BJ (cell line): ENCODE measurements at regions of chr19 and their contacts with region 1.

Region 1: DNA sequence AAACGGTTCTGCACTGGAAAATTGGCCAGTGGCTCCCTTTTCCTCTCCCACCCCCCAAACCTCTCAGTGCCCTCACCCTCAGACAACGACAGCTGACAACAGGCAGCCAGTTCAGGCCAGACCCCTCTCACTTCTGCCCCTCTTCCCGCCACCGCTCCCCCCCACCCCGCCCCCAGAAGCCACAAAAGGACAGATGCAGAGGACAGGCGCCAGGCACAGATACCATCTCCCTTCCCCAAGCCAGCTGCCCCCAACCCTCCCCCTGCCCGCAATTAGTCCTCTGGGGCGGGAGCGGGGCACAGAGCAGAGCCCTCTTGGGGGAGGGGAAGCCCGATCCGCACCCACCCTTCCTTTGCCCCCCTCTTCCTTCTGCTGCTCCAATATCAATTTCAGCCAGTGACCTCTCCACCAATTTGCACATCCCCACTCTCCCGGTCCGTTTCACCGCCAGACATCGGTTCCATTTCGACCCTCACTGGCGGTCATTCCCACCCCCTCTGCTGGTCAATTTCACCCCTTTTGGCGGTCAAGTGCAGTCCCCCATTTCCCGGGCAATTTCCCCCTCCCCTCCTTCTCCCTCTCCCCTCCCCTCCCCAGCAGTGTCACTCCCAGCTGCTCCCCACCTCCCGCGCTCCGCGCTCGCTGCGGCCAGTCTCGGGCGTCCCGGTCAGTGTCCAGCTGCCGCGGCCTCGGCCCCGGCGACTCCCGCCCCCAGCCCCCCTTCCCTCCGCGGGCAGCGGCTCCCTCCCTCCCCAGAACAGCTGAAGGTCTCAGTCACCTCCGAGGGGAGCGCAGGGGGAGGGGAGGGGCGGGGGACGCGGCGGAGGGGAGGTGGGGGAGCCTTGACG is at the start of gene SHD:
- DNase-seq: no peak
- H3K4me3 ChIP-seq: no peak within 1 kb of the TSS; the same call in 1 of the 2 replicates
- H3K27me3 ChIP-seq: peaks cover 24% of the 10 kb centered on the region
- CTCF ChIP-seq: no peak
- polyA plus RNA-seq, gene SHD: not detected in 2 replicates

Region 2: DNA sequence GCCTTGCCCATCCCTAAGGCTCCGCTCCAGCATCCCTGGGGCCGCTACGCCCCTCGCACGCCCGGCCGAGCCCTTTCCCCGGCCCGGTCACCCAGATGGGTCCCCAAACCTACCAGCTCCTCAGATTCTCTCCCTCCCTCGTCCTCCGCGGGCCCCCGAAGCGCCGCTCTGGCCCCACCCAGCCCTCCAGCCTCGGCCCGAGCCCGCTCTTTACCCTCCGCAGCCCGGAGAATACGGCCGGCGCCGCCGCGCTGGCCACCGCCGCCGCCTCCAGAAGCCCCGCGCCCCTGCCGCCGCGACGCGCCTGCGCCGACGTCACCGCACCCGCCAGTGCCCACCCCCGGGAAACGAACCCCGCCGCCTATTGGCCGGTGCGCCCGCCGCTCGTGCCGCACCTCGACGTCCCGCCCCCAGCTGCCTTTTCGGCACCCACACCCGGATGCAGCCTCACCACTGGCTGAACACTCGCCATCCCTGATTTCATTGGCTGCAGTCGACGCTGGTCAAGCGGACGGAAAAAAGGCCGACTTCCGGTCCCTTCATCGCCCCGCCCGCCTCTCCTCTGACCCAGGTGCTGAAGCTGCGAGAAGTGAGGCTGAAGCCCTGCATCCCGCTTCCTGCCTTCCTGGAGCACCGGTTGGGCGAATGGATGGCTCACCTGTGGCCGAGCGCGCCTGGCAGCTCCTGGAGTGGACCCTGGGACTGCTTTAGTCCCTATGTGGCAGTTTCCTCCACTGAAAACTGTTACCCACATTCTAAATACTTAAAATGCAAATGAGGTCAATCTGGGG is 307.6 kb before region 1 on chr19 and contains the start of gene DAPK3:
- CTCF ChIA-PET with region 1: no interaction called
- POLR2A ChIA-PET with region 1: interaction called, 12 read pairs
- DNase-seq: peak; percentile 81
- H3K4me3 ChIP-seq: peak within 1 kb of the TSS; percentile 99
- H3K27me3 ChIP-seq: no peaks in the 10 kb centered on the region
- CTCF ChIP-seq: no peak
- polyA plus RNA-seq, gene DAPK3: 132 and 178 TPM in 2 replicates

Region 3: DNA sequence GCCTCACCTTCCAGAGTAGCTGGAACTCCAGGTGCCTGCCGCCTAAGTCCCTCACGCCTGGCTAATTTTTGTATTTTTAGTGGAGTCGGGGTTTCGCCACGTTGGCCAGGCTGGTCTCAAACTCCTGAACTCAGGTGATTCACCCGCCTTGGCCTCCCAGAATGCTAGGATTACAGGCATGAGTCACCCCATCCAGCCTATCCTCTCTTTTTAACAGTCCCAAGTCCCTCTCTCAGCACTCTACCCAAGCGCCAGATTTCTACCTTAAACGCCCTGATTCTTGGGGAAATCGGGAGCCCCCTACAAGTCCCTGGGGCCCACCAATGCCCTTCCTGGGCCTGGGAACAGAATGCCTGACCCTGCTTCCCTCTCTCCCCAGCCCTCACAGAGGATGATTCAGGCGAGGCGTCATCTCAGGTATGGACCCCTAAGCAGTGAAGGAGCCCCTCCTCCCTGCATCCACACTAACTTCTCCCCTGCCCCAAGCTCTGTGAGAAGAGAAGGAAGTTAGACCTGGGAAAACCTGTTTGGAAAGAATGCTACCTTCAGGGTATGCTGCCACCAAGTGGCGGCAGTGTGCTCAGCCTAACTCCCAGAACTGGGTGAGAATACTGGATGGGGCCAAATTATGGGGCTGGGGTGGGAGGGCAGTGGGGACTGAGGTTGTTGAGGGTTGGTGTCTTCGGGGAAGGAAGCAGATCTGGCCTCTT is 70.1 kb before region 1 on chr19:
- CTCF ChIA-PET with region 1: no interaction called
- POLR2A ChIA-PET with region 1: no interaction called
- DNase-seq: no peak
- H3K4me3 ChIP-seq: no peak overlapping the region
- H3K27me3 ChIP-seq: no peaks in the 10 kb centered on the region
- CTCF ChIP-seq: peak; percentile 58

Region 4: DNA sequence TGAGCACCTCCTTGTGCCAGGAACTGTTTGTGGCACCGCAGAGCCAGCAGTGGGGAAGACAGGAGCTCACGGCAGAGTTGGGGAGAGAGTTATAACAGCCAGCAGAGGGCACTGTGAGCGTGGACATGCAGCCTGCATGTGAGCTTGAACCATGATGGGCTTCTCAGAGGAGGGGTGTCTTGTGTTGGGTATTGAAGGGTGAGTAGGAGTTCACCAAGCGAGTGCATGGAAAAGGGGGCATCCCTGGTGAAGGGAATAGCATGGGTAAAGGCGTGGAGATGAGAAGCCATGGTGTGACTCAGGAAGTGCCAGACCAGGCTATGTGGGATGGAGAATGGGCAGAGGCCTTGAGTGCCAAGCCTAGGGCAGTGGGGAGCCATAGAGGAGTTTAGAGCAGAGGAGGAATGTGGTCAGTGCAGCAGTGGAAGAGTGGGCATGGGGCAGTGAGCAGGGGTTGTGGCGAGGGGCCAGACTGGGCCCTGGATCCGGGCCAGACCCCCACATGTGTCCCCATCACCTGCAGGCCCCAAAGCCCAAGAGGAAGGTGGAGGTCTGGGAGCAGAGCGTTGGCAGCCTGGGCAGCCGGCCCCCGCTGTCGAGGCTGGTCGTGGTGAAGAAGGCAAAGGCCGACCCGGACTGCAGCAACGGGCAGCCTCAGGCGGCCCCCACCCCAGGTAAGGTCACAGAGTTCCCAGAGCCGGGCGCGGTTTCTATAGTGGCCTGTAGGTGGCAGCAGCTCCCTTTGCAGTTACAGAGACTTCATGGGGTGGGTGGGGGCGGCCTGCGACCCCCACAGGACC is 11.3 kb before region 1 on chr19:
- CTCF ChIA-PET with region 1: interaction called, 29 read pairs
- POLR2A ChIA-PET with region 1: no interaction called
- DNase-seq: no peak
- H3K4me3 ChIP-seq: no peak overlapping the region
- H3K27me3 ChIP-seq: no peaks in the 10 kb centered on the region
- CTCF ChIP-seq: peak; percentile 88

Region 5: DNA sequence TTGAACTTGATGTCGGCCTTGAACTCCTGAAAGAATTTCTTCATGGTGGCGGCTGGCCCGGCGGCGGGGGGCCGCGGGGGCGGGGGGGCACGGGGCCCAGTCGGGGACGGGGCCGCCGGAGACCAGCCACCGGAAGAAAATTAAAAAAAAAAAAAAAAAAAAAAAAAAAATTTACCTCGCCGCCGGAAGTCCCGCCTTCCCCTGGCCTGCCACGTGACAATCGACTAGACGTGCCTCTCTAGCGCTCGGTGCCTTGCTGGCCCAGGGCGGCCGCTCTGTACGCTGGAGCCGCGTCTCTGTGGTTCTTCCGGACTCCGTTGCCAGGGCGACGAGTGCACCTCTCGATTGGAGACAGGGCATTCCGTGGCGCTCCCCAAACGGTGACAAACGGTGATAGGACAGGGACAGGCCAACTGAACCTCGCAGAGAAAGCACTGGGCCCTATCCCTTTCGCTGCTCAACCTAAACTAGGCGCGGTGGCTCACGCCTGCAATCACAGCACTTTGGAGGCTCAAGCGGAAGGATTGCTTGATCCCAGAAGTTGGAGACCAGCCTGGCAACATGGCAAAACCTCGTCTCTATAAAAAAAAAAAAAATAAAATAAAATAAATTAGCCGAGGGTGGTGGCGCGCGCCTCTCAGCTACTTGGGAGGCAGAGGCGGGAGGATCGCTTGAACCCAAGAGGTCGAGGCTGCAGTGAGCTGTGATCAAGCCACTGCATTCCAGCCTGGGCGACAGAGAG is 179.2 kb after region 1 on chr19 and contains the start of gene UBXN6:
- CTCF ChIA-PET with region 1: no interaction called
- POLR2A ChIA-PET with region 1: interaction called, 20 read pairs
- DNase-seq: peak; percentile 72
- H3K4me3 ChIP-seq: peak within 1 kb of the TSS; percentile 74
- H3K27me3 ChIP-seq: no peaks in the 10 kb centered on the region
- CTCF ChIP-seq: no peak
- polyA plus RNA-seq, gene UBXN6: 85.5 and 127 TPM in 2 replicates